ENCODE measurements at regions of chr6 and their contacts with region 1.

Region 1: GRCh38 chr6:89562118-89562973 is 76.2 kb downstream of the LYRM2 start:
- DNase-seq: no peak
- H3K4me3 ChIP-seq: no peak overlapping the region
- H3K27ac ChIP-seq: no peak overlapping the region
- H3K4me1 ChIP-seq: no peaks in the 10 kb centered on the region
- H3K27me3 ChIP-seq: peaks cover 0 to 1% of the 10 kb centered on the region in 2 experiments
- CTCF ChIP-seq: no peak
- POLR2A ChIP-seq: no peak

Region 2: GRCh38 chr6:89007209-89008000 is 554.9 kb before region 1 on chr6:
- CTCF ChIA-PET with region 1: no interaction called
- POLR2A ChIA-PET with region 1: no interaction called
- dilution Hi-C with region 1: no loop called
- intact Hi-C with region 1: no loop called
- DNase-seq: no peak
- H3K4me3 ChIP-seq: no peak overlapping the region
- H3K27ac ChIP-seq: no peak overlapping the region
- H3K4me1 ChIP-seq: no peaks in the 10 kb centered on the region
- H3K27me3 ChIP-seq: peaks cover 2 to 3% of the 10 kb centered on the region in 2 experiments
- CTCF ChIP-seq: no peak
- POLR2A ChIP-seq: no peak

Region 3: DNA sequence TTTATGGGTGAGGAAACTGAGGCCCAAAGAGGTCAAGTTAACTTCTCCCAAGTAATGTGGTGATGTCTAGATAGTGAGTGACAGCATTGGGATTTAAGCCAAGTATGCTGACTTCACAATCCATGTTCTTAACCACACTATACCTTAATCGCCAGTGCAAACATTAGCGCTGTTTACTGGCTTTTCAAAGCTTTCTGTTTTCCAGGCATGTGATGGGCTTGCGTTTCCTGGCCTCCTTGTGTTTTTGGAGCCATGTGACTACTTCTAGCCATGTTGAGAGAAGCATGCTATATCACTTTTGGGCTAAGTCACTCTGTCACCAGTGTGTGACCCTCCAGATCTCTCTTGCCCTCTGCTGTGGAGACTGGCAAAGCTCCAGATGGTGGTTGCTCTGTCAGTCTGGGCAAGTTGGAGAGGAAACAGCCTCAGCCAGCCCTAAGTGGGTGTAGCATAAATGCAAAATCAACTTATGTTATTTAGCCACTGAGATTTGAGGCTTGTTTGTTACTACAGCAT is 52.5 kb before region 1 on chr6:
- CTCF ChIA-PET with region 1: no interaction called
- POLR2A ChIA-PET with region 1: no interaction called
- dilution Hi-C with region 1: loop called (anchors 5 kb)
- intact Hi-C with region 1: no loop called
- DNase-seq: peak; percentile 4
- H3K4me3 ChIP-seq: no peak overlapping the region
- H3K27ac ChIP-seq: no peak overlapping the region
- H3K4me1 ChIP-seq: no peaks in the 10 kb centered on the region
- H3K27me3 ChIP-seq: no peaks in the 10 kb centered on the region
- CTCF ChIP-seq: no peak
- POLR2A ChIP-seq: no peak

Measured in endothelial cell of umbilical vein (primary cell).